B cell (primary cell): ENCODE measurements at regions of chr14 and their contacts with region 1.

Region 1: GRCh38 chr14:58637391-58638230 is at the start of gene DACT1:
- DNase-seq: peak; percentile 82
- ATAC-seq: peak; percentile 81
- H3K4me3 ChIP-seq: peak within 1 kb of the TSS; percentile 51 to 74 (median 57)
- H3K4me3 Mint-ChIP-seq: peak within 1 kb of the TSS; percentile 93
- H3K27ac ChIP-seq: peak within 1 kb of the TSS in 1 of 2 donors; percentile 58
- H3K27ac Mint-ChIP-seq: peak within 1 kb of the TSS; percentile 93
- H3K4me1 ChIP-seq: peaks cover 18 to 44% of the 10 kb centered on the region in 2 donors
- H3K4me1 Mint-ChIP-seq: peaks cover 48% of the 10 kb centered on the region
- H3K27me3 ChIP-seq: peaks cover 0 to 4% (median 0%) of the 10 kb centered on the region in 4 experiments
- H3K27me3 Mint-ChIP-seq: peaks cover 13% of the 10 kb centered on the region
- CTCF ChIP-seq: no peak
- total RNA-seq, gene DACT1: 2.2 and 2.7 TPM in 2 replicates

Region 2: DNA sequence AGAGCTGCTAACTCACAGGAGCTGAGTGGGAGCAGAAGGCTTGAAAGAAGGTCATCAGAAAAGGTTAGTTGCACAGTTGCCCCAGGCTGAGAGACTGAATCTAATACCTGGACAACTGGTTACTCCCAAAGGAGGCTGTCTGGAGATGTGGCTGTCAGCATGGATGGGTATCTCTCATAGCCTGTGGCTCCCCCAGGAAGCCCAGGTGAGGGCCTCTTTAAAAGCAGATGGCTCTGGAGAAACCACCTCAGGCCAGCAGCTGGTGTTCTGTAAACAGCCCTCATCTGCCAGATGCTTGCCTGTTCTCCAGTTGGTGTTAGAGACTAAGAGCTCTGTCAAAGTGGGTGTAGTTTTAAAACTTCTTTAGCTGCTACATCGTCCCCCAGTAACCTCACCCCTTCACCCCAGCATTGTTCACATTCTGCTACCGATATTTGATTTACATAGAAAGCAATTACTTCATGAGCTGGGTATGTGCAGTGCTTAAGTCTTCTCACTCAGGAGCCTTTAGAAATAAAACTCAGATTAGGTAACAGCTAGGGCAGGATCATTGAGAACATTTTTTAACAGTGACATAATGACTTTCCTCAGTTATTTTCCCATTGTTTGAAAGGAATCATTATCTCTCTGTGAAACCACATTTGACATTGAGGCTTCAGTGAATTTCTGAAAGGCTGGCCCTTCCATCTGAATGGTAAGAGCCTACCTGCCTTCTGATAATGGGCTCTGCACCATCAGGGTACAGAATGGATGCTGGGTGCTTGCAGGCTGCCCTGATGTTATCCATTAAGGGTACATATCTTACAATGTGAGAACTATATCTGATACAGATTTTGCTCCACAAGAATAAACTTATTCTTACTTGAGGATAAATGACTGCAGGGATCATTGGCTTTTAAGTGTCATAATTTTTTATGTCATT is 26.1 kb after region 1 on chr14:
- CTCF ChIA-PET with region 1: no interaction called
- POLR2A ChIA-PET with region 1: no interaction called
- intact Hi-C with region 1: no loop called
- DNase-seq: no peak
- ATAC-seq: no peak
- H3K4me3 ChIP-seq: no peak overlapping the region
- H3K4me3 Mint-ChIP-seq: no peak overlapping the region
- H3K27ac ChIP-seq: no peak overlapping the region
- H3K27ac Mint-ChIP-seq: no peak overlapping the region
- H3K4me1 ChIP-seq: no peaks in the 10 kb centered on the region
- H3K4me1 Mint-ChIP-seq: no peaks in the 10 kb centered on the region
- H3K27me3 ChIP-seq: no peaks in the 10 kb centered on the region
- H3K27me3 Mint-ChIP-seq: no peaks in the 10 kb centered on the region
- CTCF ChIP-seq: no peak

Region 3: GRCh38 chr14:59464486-59465315 is 827.1 kb after region 1 on chr14:
- CTCF ChIA-PET with region 1: no interaction called
- POLR2A ChIA-PET with region 1: no interaction called
- intact Hi-C with region 1: loop called (anchors 5 kb)
- DNase-seq: peak; percentile 77
- ATAC-seq: peak; percentile 76
- H3K4me3 ChIP-seq: peak overlapping the region in 4 of 5 experiments; percentile 37 to 70 (median 60)
- H3K4me3 Mint-ChIP-seq: peak overlapping the region; percentile 94
- H3K27ac ChIP-seq: no peak overlapping the region
- H3K27ac Mint-ChIP-seq: peak overlapping the region; percentile 89
- H3K4me1 ChIP-seq: peaks cover 12% of the 10 kb centered on the region in 2 donors
- H3K4me1 Mint-ChIP-seq: peaks cover 18% of the 10 kb centered on the region
- H3K27me3 ChIP-seq: peaks cover 0 to 6% (median 6%) of the 10 kb centered on the region in 4 experiments
- H3K27me3 Mint-ChIP-seq: no peaks in the 10 kb centered on the region
- CTCF ChIP-seq: no peak

Region 4: GRCh38 chr14:59483900-59484638 is 846.5 kb after region 1 on chr14 and contains the starts of genes JKAMP and L3HYPDH:
- CTCF ChIA-PET with region 1: no interaction called
- POLR2A ChIA-PET with region 1: no interaction called
- intact Hi-C with region 1: loop called (anchors 10 kb)
- DNase-seq: peak; percentile 96
- ATAC-seq: peak; percentile 92
- H3K4me3 ChIP-seq: peak within 1 kb of the TSS; percentile 83 to 97 (median 93)
- H3K4me3 Mint-ChIP-seq: peak within 1 kb of the TSS; percentile 96
- H3K27ac ChIP-seq: peak within 1 kb of the TSS; percentile 57 to 79
- H3K27ac Mint-ChIP-seq: peak within 1 kb of the TSS; percentile 90
- H3K4me1 ChIP-seq: peaks cover 36 to 40% of the 10 kb centered on the region in 2 donors
- H3K4me1 Mint-ChIP-seq: peaks cover 56% of the 10 kb centered on the region
- H3K27me3 ChIP-seq: no peaks in the 10 kb centered on the region
- H3K27me3 Mint-ChIP-seq: no peaks in the 10 kb centered on the region
- CTCF ChIP-seq: peak; percentile 70
- total RNA-seq, gene JKAMP: 25.7 and 30.3 TPM in 2 replicates
- total RNA-seq, gene L3HYPDH: 67.3 and 74.5 TPM in 2 replicates